Natural killer cell (primary cell): ENCODE measurements at regions of chr1 and their contacts with region 1.

Region 1: GRCh38 chr1:113946678-113947387 is 17.7 kb downstream of the HIPK1 start:
- DNase-seq: no peak
- ATAC-seq: peak in 2 of 3 donors; percentile 13 to 19
- H3K4me3 ChIP-seq: no peak overlapping the region
- H3K4me3 Mint-ChIP-seq: peak overlapping the region; percentile 63
- H3K27ac ChIP-seq: peak overlapping the region; percentile 74
- H3K27ac Mint-ChIP-seq: peak overlapping the region; percentile 82 to 85
- H3K4me1 ChIP-seq: peaks cover 19% of the 10 kb centered on the region
- H3K4me1 Mint-ChIP-seq: peaks cover 65 to 67% of the 10 kb centered on the region in 2 donors
- H3K27me3 ChIP-seq: no peaks in the 10 kb centered on the region
- H3K27me3 Mint-ChIP-seq: no peaks in the 10 kb centered on the region
- CTCF ChIP-seq: no peak

Region 2: GRCh38 chr1:113963281-113963906 is 16.6 kb after region 1 on chr1:
- intact Hi-C with region 1: loop called (anchors 2 kb)
- DNase-seq: peak in 1 of 2 donors; percentile 51
- ATAC-seq: peak; percentile 30 to 48 (median 34)
- H3K4me3 ChIP-seq: no peak overlapping the region
- H3K4me3 Mint-ChIP-seq: no peak overlapping the region
- H3K27ac ChIP-seq: no peak overlapping the region
- H3K27ac Mint-ChIP-seq: peak overlapping the region; percentile 25 to 85
- H3K4me1 ChIP-seq: no peaks in the 10 kb centered on the region
- H3K4me1 Mint-ChIP-seq: peaks cover 33 to 35% of the 10 kb centered on the region in 2 donors
- H3K27me3 ChIP-seq: no peaks in the 10 kb centered on the region
- H3K27me3 Mint-ChIP-seq: no peaks in the 10 kb centered on the region
- CTCF ChIP-seq: no peak